Naive thymus-derived CD4-positive, alpha-beta T cell (primary cell): ENCODE measurements at regions of chr10 and their contacts with region 1.

Region 1: DNA sequence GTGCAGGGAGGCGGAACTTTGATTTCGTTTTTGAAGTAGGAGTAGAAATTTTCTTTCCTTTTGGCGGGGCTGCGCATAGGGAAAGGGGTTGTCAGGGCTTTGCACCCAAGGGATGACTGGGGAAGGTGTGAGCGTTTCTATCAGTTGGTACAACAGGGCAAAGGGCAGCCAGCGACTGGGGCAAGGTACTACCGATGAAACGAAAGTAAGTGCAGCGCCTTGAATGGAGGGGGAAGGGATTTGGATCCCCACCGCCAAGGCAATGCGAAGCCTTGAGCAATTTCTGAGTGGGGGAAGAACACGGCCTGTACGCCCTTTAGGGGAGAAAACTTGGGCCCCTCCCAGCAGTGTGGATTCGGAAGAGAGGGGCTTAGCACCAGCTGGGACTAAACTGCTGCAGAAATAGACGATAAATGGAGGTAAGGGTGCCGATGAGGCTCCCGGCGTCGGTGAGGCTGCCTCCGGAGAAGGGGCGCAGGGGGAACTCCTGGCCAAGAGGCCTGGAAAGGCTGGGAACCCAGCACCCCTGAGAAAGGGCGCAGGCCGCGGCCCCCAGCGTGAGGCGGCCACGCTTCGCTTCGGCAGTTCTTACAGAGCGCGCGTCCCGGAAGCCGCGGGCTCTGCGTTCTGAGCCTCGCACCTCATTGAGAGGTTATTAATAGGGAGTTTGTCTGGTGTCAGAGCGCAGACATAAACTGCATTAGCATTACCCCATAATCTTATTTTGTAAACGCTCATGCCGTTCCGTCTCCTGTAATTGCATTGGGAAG is 10.0 kb upstream of the TLX1 start:
- DNase-seq: peak in 8 of 9 donors; percentile 35 to 58 (median 47)
- ATAC-seq: peak; percentile 84
- H3K4me3 ChIP-seq: peak overlapping the region; percentile 87
- H3K4me3 Mint-ChIP-seq: peak overlapping the region; percentile 88 to 100 (median 96)
- H3K27ac ChIP-seq: peak overlapping the region; percentile 55
- H3K27ac Mint-ChIP-seq: peak overlapping the region; percentile 83 to 97 (median 90)
- H3K4me1 ChIP-seq: peaks cover 6 to 21% of the 10 kb centered on the region in 2 donors
- H3K4me1 Mint-ChIP-seq: peaks cover 21 to 32% (median 30%) of the 10 kb centered on the region in 7 donors
- H3K27me3 ChIP-seq: no peaks in the 10 kb centered on the region
- H3K27me3 Mint-ChIP-seq: peaks cover 41 to 86% (median 47%) of the 10 kb centered on the region in 5 donors

Region 2: GRCh38 chr10:100653957-100654781 is 466.9 kb before region 1 on chr10:
- CTCF ChIA-PET with region 1: no interaction called
- POLR2A ChIA-PET with region 1: no interaction called
- intact Hi-C with region 1: loop called in 1 of 2 experiments (anchors 10 kb)
- DNase-seq: peak in 1 of 9 donors; percentile 36
- ATAC-seq: peak; percentile 28
- H3K4me3 ChIP-seq: no peak overlapping the region
- H3K4me3 Mint-ChIP-seq: peak overlapping the region; percentile 64 to 92 (median 85)
- H3K27ac ChIP-seq: no peak overlapping the region
- H3K27ac Mint-ChIP-seq: no peak overlapping the region
- H3K4me1 ChIP-seq: peaks cover 4 to 16% of the 10 kb centered on the region in 2 donors
- H3K4me1 Mint-ChIP-seq: peaks cover 18 to 35% (median 27%) of the 10 kb centered on the region in 7 donors
- H3K27me3 ChIP-seq: peaks cover 19 to 27% of the 10 kb centered on the region in 2 donors
- H3K27me3 Mint-ChIP-seq: peaks cover 68 to 76% (median 75%) of the 10 kb centered on the region in 5 donors

Region 3: GRCh38 chr10:101176577-101176976 is 55.5 kb after region 1 on chr10:
- CTCF ChIA-PET with region 1: no interaction called
- POLR2A ChIA-PET with region 1: no interaction called
- intact Hi-C with region 1: no loop called
- DNase-seq: no peak
- ATAC-seq: no peak
- H3K4me3 ChIP-seq: no peak overlapping the region
- H3K4me3 Mint-ChIP-seq: no peak overlapping the region
- H3K27ac ChIP-seq: no peak overlapping the region
- H3K27ac Mint-ChIP-seq: no peak overlapping the region
- H3K4me1 ChIP-seq: no peaks in the 10 kb centered on the region
- H3K4me1 Mint-ChIP-seq: no peaks in the 10 kb centered on the region
- H3K27me3 ChIP-seq: no peaks in the 10 kb centered on the region
- H3K27me3 Mint-ChIP-seq: peaks cover 42 to 76% (median 62%) of the 10 kb centered on the region in 5 donors